ENCODE measurements at regions of chr18 and their contacts with region 1.

Region 1: DNA sequence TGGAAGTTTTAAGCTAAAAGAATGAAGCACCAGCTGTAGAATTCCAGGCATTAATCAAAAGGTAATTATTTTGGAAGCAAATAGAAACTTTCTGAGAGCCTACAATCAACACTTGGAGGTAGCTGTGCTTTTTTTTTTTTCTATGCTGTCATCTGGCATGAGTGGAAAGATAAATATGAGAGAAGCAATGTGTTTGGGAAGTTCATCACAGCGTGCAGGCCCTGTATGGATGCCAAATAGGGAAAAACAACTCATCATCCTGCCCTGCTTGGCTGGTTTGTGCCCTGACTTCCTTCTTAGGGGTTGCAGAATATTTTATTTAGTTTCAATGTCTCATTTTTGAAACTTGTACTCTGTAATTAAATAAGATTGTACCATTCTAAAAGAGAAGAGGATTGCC is 437.4 kb downstream of the PIK3C3 start:
- DNase-seq: no peak
- ATAC-seq: no peak
- H3K4me3 ChIP-seq: no peak overlapping the region
- H3K27ac ChIP-seq: no peak overlapping the region
- H3K4me1 ChIP-seq: no peaks in the 10 kb centered on the region
- H3K27me3 ChIP-seq: no peaks in the 10 kb centered on the region

Region 2: GRCh38 chr18:41731885-41732284 is 660.5 kb before region 1 on chr18:
- intact Hi-C with region 1: no loop called
- DNase-seq: no peak
- ATAC-seq: no peak
- H3K4me3 ChIP-seq: no peak overlapping the region
- H3K27ac ChIP-seq: no peak overlapping the region
- H3K4me1 ChIP-seq: no peaks in the 10 kb centered on the region
- H3K27me3 ChIP-seq: no peaks in the 10 kb centered on the region

Region 3: DNA sequence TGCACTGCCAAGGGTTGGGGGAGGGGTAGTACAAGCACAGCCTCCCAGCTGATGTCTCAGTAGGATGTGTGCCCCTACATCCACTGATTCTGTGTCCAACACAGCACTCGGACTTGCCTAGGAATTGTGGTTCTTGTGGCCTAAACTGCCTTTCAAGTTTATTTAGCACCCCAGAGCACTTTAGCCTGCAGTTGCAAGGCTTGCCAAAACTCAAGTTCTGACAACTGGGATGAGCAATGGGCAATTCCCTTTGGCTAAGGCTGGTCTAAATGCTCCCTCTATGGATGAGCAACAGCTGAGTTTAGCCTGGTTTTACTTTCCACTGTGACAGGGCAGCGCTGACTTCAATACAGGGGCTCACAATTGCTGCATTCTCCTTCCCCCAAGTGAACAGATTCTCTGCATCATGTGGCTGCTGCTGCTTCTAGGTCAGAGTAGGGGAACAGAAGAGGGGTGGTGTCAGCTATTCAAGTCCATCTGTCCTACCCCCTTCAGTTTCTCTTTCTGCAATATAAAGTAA is 34.1 kb after region 1 on chr18:
- intact Hi-C with region 1: loop called in 1 of 2 experiments (anchors 2 kb)
- DNase-seq: no peak
- ATAC-seq: no peak
- H3K4me3 ChIP-seq: no peak overlapping the region
- H3K27ac ChIP-seq: no peak overlapping the region
- H3K4me1 ChIP-seq: no peaks in the 10 kb centered on the region
- H3K27me3 ChIP-seq: no peaks in the 10 kb centered on the region

Region 4: DNA sequence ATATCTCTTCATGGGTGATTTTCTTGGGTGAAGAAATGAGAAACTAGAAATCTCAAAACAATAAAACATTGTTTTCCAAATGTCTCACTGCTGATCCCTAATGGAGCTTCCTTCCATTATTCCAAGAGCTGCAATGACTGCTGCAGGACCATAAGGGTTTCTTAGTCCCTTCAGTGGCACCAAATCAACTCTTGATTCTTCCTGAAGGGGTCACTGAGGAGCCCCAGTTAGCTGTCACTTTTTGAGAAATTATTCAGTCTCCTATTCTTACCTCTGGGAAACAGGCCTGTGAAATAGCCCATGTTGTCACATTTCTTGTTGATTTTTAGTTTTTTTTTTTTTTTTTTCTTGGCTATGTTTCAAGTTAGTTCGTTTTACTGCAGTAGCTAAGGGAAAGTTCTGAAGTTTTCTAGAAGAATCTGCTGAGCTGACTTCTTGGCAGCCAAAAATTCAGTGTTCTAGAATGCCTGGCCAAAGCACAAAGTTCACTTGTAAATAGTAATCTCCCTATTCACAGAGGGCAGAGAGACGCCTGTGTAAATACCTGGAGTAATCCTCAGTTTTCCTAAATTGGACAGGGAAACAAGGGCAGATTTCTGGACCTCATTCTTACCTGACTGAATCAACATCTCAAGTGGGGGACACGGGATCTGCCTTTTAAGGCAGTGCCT is 243.1 kb after region 1 on chr18:
- intact Hi-C with region 1: no loop called
- DNase-seq: no peak
- ATAC-seq: no peak
- H3K4me3 ChIP-seq: no peak overlapping the region
- H3K27ac ChIP-seq: no peak overlapping the region
- H3K4me1 ChIP-seq: no peaks in the 10 kb centered on the region
- H3K27me3 ChIP-seq: no peaks in the 10 kb centered on the region

Measured in aorta (tissue), 5 donors.